ENCODE measurements at regions of chr16 and their contacts with region 1.

Region 1: GRCh38 chr16:4330277-4330874 is 14.5 kb downstream of the GLIS2 start:
- DNase-seq: peak; percentile 59 to 72
- ATAC-seq: peak; percentile 64 to 82
- H3K4me3 ChIP-seq: no peak overlapping the region
- H3K27ac ChIP-seq: no peak overlapping the region
- H3K4me1 ChIP-seq: peaks cover 20 to 29% of the 10 kb centered on the region in 2 donors
- H3K27me3 ChIP-seq: no peaks in the 10 kb centered on the region
- CTCF ChIP-seq: peak; percentile 95 to 99 (median 98)
- POLR2A ChIP-seq: no peak

Region 2: GRCh38 chr16:4183237-4184036 is 146.9 kb before region 1 on chr16:
- in situ Hi-C with region 1: loop called in 1 of 4 experiments (anchors 25 kb)
- intact Hi-C with region 1: no loop called
- DNase-seq: peak; percentile 80 to 90
- ATAC-seq: peak; percentile 83 to 90
- H3K4me3 ChIP-seq: peak overlapping the region; percentile 65 to 96 (median 76)
- H3K27ac ChIP-seq: peak overlapping the region; percentile 93 to 98 (median 94)
- H3K4me1 ChIP-seq: peaks cover 4 to 11% of the 10 kb centered on the region in 2 donors
- H3K27me3 ChIP-seq: no peaks in the 10 kb centered on the region
- CTCF ChIP-seq: peak in 3 of 5 experiments; percentile 22 to 51 (median 43)
- POLR2A ChIP-seq: no peak

Region 3: DNA sequence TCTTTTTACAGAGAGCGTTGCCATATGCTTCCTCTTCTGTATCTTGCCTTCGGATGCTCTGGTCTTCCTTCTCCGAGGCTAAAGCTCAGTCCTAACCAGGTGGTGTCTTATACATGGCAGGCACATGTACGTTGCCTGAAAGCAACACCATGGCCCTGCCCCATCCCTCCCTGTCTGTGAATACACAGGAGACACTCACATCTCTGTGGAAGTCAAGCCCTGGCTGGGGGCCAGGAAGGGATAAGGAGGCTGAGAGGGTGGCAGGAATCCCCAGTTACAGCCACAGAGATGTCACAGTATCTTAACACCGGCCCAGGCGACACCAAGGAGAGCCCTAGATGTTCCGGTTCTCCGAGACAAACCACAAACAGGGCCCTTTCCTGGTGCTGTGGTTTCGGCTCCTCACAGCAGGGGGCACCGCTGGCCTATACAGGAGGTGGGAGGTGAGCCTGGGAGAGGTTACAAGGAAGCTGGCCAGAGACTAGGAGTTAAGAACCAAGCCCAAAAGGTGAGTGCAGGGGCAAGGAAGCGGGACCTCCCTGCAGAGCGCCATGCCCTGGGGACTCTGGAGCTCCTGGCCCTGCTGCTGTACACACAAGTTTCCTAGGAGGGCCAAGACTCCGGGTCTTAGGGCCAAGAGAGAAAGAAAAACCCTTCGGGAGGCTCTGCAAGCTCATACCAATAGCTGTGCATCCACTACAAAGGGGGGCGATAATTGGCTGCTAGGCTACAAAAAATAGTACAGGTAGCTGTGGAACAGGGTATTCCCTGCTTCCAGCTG is 130.2 kb before region 1 on chr16:
- in situ Hi-C with region 1: loop called in 1 of 4 experiments (anchors 25 kb)
- intact Hi-C with region 1: loop called (anchors 10 kb)
- DNase-seq: peak; percentile 39 to 55
- ATAC-seq: peak; percentile 47 to 74
- H3K4me3 ChIP-seq: no peak overlapping the region
- H3K27ac ChIP-seq: peak overlapping the region; percentile 91 to 100 (median 98)
- H3K4me1 ChIP-seq: peaks cover 3 to 15% of the 10 kb centered on the region in 2 donors
- H3K27me3 ChIP-seq: no peaks in the 10 kb centered on the region
- CTCF ChIP-seq: peak; percentile 58 to 80 (median 73)
- POLR2A ChIP-seq: no peak

Region 4: DNA sequence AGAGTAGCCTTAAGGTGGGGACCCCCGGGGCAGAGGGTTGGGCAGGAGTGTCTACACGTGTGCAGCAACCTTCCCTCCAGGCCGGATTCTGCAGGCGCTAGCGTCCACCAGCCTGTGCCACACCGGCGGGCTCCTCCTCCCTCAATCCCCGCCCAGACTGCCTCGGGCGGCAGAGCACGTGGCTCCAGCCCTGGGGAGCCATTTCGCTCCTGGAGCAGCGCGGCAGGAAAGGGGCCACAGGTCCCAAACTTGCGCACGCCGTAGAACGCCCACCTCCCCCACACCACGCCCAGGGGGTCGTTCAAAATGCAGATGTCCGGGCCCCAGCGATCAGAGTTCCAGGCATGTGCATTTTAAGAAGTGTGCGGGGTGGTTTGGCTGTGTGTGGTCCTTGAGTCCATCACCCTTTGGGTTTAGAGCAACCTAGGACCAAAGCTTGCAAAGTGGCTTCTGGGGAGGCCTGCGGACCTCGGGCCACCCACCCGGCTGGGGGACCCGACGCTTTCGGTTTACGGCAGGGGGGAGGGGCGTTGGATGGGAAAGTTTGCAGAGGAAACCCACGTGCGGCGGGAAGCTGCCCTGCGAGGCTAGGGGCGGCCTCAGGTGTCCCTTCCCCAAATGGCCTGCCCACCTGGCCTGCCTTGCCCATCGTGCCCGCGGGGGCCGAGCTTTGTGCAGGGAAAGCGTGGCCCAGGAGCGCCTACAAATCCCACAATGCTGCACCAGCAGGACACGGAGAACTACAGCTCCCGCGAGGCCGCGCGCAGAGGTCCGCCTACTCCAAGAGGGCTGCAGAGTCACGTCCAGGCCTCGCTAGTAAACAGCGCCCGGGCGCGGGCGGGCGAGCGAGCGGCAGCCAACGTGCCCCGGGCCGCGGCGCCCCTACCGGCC is 59.0 kb before region 1 on chr16:
- in situ Hi-C with region 1: no loop called
- intact Hi-C with region 1: loop called (anchors 5 kb)
- DNase-seq: peak; percentile 92 to 93
- ATAC-seq: peak; percentile 85
- H3K4me3 ChIP-seq: peak overlapping the region; percentile 88 to 98 (median 90)
- H3K27ac ChIP-seq: peak overlapping the region; percentile 90 to 98 (median 96)
- H3K4me1 ChIP-seq: peaks cover 14 to 27% of the 10 kb centered on the region in 2 donors
- H3K27me3 ChIP-seq: no peaks in the 10 kb centered on the region
- CTCF ChIP-seq: peak in 2 of 5 experiments; percentile 22 to 49
- POLR2A ChIP-seq: peak; percentile 86 to 92

Region 5: GRCh38 chr16:4288148-4288921 is 42.0 kb before region 1 on chr16:
- in situ Hi-C with region 1: loop called (anchors 5 kb)
- intact Hi-C with region 1: loop called (anchors 1 kb)
- DNase-seq: peak; percentile 47 to 61
- ATAC-seq: peak; percentile 56 to 61
- H3K4me3 ChIP-seq: peak overlapping the region in 1 of 4 donors; percentile 21
- H3K27ac ChIP-seq: peak overlapping the region in 1 of 4 donors; percentile 30
- H3K4me1 ChIP-seq: peaks cover 28 to 41% of the 10 kb centered on the region in 2 donors
- H3K27me3 ChIP-seq: no peaks in the 10 kb centered on the region
- CTCF ChIP-seq: peak; percentile 89 to 99 (median 96)
- POLR2A ChIP-seq: no peak

Region 6: DNA sequence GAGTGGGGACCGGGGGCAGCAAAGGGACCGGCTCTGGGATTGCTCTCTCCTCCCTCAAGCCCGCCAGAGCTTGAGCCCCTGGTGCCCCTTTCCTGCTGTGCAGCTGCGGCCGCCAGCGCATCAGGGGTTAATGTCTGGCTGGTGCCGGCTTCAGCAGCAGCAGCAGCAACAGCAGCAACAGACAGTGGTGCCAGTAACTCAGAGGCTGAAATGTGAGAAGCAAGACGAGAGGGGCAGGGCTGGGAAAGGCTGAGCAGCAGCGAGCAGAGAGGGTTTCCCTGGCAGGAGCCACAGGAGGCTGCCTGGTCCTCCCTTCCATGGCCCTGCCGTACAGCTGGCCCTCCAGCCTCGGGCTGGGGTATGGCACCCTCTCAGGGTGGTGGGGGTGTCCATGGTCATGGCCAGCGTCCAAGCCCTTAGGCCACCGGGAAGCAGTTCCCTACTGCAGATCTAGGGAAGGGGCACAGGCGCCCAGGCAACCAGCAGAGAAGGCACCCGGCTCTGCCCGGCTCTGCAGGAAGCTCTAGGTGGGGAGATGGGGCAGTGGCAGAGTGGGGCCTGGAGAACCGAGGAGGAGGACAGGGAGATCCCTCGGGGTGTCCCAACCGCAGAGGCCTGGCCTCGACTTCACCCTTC is 36.4 kb before region 1 on chr16:
- in situ Hi-C with region 1: loop called (anchors 5 kb)
- intact Hi-C with region 1: no loop called
- DNase-seq: peak; percentile 66 to 80
- ATAC-seq: peak; percentile 88 to 89
- H3K4me3 ChIP-seq: peak overlapping the region in 3 of 4 donors; percentile 4 to 13 (median 5)
- H3K27ac ChIP-seq: peak overlapping the region; percentile 66 to 79 (median 71)
- H3K4me1 ChIP-seq: peaks cover 38 to 54% of the 10 kb centered on the region in 2 donors
- H3K27me3 ChIP-seq: no peaks in the 10 kb centered on the region
- CTCF ChIP-seq: no peak
- POLR2A ChIP-seq: no peak

Measured in gastrocnemius medialis (tissue), 4 donors.